Mammary epithelial cell (primary cell): ENCODE measurements at regions of chr14 and their contacts with region 1.

Region 1: GRCh38 chr14:76882651-76883050 is 56.4 kb downstream of the LRRC74A start:
- DNase-seq: no peak
- H3K4me3 ChIP-seq: no peak overlapping the region
- H3K27ac ChIP-seq: no peak overlapping the region
- H3K4me1 ChIP-seq: no peaks in the 10 kb centered on the region
- H3K27me3 ChIP-seq: no peaks in the 10 kb centered on the region
- CTCF ChIP-seq: no peak

Region 2: DNA sequence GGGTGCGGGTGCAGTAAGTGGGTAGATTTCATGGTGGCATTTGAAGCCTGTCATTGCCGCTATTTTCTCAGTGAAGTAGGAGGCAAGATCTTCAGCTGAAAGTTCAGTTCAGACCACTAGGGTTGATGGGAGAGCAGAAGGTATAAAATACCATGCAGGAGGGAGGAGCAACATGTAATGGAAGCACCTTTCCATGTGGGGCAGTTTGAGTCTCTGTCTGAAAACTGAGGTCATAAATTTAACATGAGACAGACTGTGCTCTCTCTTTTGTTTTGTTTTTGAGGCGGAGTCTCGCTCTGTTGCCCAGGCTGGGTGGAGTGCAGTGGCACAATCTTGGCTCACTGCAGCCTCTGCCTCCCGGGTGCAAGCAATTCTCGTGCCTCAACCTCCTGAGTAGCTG is 33.8 kb before region 1 on chr14:
- CTCF ChIA-PET with region 1: no interaction called
- dilution Hi-C with region 1: no loop called
- in situ Hi-C with region 1: no loop called
- intact Hi-C with region 1: no loop called
- DNase-seq: no peak
- H3K4me3 ChIP-seq: no peak overlapping the region
- H3K27ac ChIP-seq: no peak overlapping the region
- H3K4me1 ChIP-seq: no peaks in the 10 kb centered on the region
- H3K27me3 ChIP-seq: no peaks in the 10 kb centered on the region
- CTCF ChIP-seq: no peak

Region 3: DNA sequence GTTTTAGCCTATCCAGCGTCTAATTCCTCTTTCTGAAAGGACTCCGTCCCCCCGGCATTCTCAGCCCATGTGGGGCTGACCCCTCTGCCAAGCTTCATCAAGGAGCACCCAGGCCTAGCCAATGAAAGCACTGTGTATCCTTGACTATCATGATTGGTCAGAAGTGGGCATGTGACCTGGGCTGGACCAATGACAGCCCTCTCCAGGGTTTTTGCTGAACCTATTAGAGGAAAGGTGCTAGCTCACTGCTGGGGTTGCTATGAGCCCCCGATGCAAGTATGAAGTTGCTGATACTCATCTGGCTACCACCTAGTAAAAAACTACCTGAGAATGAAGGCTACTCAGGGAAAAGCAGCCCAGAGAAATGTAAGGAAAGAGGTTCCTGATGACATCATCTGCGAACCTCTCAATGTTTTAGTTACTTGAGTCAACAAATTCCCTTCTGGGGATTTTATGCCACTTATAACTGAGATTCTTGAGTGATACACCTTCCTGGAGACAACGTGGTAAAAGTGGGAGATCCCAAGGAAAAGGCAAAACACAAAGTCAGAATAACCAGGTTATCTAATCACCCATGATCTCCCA is 11.7 kb after region 1 on chr14:
- CTCF ChIA-PET with region 1: no interaction called
- dilution Hi-C with region 1: no loop called
- in situ Hi-C with region 1: no loop called
- intact Hi-C with region 1: no loop called
- DNase-seq: no peak
- H3K4me3 ChIP-seq: no peak overlapping the region
- H3K27ac ChIP-seq: no peak overlapping the region
- H3K4me1 ChIP-seq: no peaks in the 10 kb centered on the region
- H3K27me3 ChIP-seq: no peaks in the 10 kb centered on the region
- CTCF ChIP-seq: no peak

Region 4: DNA sequence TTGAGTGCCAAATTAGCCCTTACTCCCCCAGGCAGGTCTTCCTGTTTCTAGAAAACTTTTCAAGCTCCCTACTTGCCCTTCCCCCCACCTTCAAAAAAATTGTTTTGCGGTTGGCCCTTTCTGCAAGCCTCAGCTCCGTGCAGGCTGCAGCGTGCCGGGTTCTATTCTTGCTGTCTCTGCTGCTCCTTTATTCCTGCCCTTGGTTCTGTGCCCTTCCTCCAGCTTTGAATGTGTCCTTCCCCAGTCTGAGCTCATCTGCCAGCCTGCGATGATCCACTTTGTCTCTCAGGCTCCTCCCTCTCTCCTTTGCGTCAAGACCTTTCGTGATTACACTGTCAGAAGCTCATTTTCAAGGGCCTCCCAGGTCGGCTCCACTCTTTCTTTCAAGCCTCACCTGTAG is 47.3 kb after region 1 on chr14:
- CTCF ChIA-PET with region 1: no interaction called
- dilution Hi-C with region 1: loop called (anchors 5 kb)
- in situ Hi-C with region 1: no loop called
- intact Hi-C with region 1: no loop called
- DNase-seq: peak; percentile 59
- H3K4me3 ChIP-seq: no peak overlapping the region
- H3K27ac ChIP-seq: no peak overlapping the region
- H3K4me1 ChIP-seq: peaks cover 16% of the 10 kb centered on the region
- H3K27me3 ChIP-seq: no peaks in the 10 kb centered on the region
- CTCF ChIP-seq: no peak

Region 5: GRCh38 chr14:77965919-77966435 is 1083.3 kb after region 1 on chr14:
- CTCF ChIA-PET with region 1: no interaction called
- dilution Hi-C with region 1: no loop called
- in situ Hi-C with region 1: no loop called
- intact Hi-C with region 1: no loop called
- DNase-seq: peak; percentile 41
- H3K4me3 ChIP-seq: peak overlapping the region; percentile 26 to 41 (median 39)
- H3K27ac ChIP-seq: no peak overlapping the region
- H3K4me1 ChIP-seq: no peaks in the 10 kb centered on the region
- H3K27me3 ChIP-seq: peaks cover 4% of the 10 kb centered on the region
- CTCF ChIP-seq: no peak